HEK293 (cell line): ENCODE measurements at regions of chr2 and their contacts with region 1.

Region 1: DNA sequence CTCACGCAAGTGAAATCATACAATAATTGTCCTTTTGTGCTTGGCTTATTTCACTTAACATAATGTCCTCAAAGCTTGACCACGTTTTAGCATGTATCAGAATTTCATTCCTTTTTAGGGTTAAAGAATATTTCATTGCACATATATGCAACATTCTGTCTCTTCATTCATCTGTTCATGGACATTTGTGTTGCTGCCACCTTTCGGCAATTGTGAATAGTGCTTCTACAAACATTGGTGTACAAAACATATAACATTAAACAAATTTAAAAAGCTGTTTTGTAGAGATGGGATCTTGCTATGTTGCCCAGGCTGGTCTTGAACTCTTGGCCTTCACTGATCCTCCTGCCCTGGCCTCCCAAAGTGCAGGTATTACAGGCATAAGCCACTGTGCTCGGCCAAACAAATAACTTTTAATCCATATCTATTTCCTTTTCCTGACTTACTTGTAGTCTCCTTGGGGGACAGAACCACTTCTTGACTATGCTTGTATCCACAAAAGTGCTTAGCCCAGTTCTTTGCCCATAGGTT is 209.3 kb downstream of the SLC4A3 start:
- H3K4me3 ChIP-seq: no peak overlapping the region
- H3K27ac ChIP-seq: no peak overlapping the region
- H3K4me1 ChIP-seq: no peaks in the 10 kb centered on the region
- CTCF ChIP-seq: no peak

Region 2: GRCh38 chr2:219848882-219849281 is 12.2 kb after region 1 on chr2:
- CTCF ChIA-PET with region 1: interaction called, 10 read pairs
- POLR2A ChIA-PET with region 1: no interaction called
- H3K4me3 ChIP-seq: no peak overlapping the region
- H3K27ac ChIP-seq: no peak overlapping the region
- H3K4me1 ChIP-seq: peaks cover 8% of the 10 kb centered on the region; the same call in 1 of the 2 replicates
- CTCF ChIP-seq: no peak